Heart right ventricle (tissue), 16 donors: ENCODE measurements at regions of chr1 and their contacts with region 1.

Region 1: GRCh38 chr1:93567255-93567918 is 114.2 kb downstream of the BCAR3 start:
- DNase-seq: peak in 1 of 2 donors; percentile 31
- ATAC-seq: peak; percentile 27 to 78 (median 63)
- H3K4me3 ChIP-seq: no peak overlapping the region
- H3K27ac ChIP-seq: peak overlapping the region in 9 of 10 donors; percentile 34 to 83 (median 67)
- H3K4me1 ChIP-seq: peaks cover 9 to 36% (median 21%) of the 10 kb centered on the region in 9 donors
- H3K27me3 ChIP-seq: no peaks in the 10 kb centered on the region
- CTCF ChIP-seq: no peak

Region 2: GRCh38 chr1:93384656-93385055 is 182.7 kb before region 1 on chr1:
- intact Hi-C with region 1: no loop called
- DNase-seq: no peak
- ATAC-seq: no peak
- H3K4me3 ChIP-seq: no peak overlapping the region
- H3K27ac ChIP-seq: no peak overlapping the region
- H3K4me1 ChIP-seq: no peaks in the 10 kb centered on the region
- H3K27me3 ChIP-seq: no peaks in the 10 kb centered on the region
- CTCF ChIP-seq: no peak

Region 3: DNA sequence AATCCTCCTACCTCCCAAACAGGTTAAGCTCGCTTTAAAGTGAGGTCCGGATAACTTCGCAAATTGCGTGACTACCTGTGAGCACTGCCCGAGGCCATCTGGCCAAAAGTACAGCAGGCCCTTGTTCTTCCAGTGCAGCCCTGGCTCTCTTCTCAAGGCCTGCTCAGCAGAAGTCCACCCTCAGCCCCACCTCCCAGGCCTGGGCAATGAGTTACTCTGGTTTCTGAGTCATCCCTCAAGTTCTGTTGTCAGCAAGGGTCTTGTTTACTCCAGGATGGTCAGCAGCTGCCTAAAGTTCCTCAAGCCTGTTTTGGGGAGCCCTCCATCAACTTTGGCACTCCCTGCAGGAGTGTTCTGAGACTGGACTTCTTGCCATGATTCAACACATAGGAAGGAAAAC is 12.5 kb after region 1 on chr1:
- intact Hi-C with region 1: loop called in 1 of 10 experiments (anchors 1 kb)
- DNase-seq: peak in 1 of 2 donors; percentile 34
- ATAC-seq: peak in 6 of 8 donors; percentile 12 to 55 (median 30)
- H3K4me3 ChIP-seq: no peak overlapping the region
- H3K27ac ChIP-seq: peak overlapping the region in 8 of 10 donors; percentile 25 to 63 (median 44)
- H3K4me1 ChIP-seq: peaks cover 7 to 68% (median 46%) of the 10 kb centered on the region in 9 donors
- H3K27me3 ChIP-seq: no peaks in the 10 kb centered on the region
- CTCF ChIP-seq: no peak

Region 4: DNA sequence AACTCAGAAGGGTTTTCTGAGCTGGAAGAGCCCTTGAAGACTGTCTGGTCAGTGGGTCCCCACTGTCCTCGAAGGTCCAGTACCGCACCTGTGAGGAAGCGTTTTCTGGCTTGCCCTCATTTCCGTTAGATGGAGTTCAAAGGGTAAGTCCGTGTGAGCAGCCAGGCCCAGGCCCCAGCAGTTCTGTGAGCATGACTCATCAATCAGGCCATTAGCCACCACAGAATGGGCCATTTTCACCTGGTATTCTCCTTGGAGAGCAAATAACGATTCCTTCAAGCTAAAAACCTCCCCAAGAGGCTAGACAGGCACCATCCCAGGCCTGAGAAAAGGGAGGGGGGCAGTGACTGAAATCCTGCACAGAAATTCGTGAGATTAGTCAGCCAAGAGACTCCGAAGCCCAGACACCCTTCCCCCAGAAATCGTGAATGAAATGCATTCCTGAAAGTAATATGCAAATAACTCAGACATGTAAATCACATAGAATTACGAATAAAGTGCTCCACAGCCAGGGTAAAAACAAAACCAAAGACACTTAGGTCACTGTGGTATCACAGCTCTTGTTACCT is 48.3 kb after region 1 on chr1:
- intact Hi-C with region 1: loop called in 1 of 10 experiments (anchors 10 kb)
- DNase-seq: no peak
- ATAC-seq: no peak
- H3K4me3 ChIP-seq: no peak overlapping the region
- H3K27ac ChIP-seq: peak overlapping the region in 8 of 10 donors; percentile 55 to 82 (median 74)
- H3K4me1 ChIP-seq: peaks cover 24 to 98% (median 65%) of the 10 kb centered on the region in 9 donors
- H3K27me3 ChIP-seq: no peaks in the 10 kb centered on the region
- CTCF ChIP-seq: no peak

Region 5: GRCh38 chr1:93672069-93672468 is 104.7 kb after region 1 on chr1:
- intact Hi-C with region 1: loop called in 1 of 10 experiments (anchors 10 kb)
- DNase-seq: peak; percentile 61 to 88
- ATAC-seq: peak; percentile 44 to 80 (median 66)
- H3K4me3 ChIP-seq: peak overlapping the region in 1 of 10 donors; percentile 3
- H3K27ac ChIP-seq: peak overlapping the region in 9 of 10 donors; percentile 21 to 78 (median 55)
- H3K4me1 ChIP-seq: peaks cover 39 to 100% (median 93%) of the 10 kb centered on the region in 9 donors
- H3K27me3 ChIP-seq: no peaks in the 10 kb centered on the region
- CTCF ChIP-seq: no peak

Region 6: GRCh38 chr1:93851327-93851712 is 283.9 kb after region 1 on chr1:
- intact Hi-C with region 1: no loop called
- DNase-seq: no peak
- ATAC-seq: no peak
- H3K4me3 ChIP-seq: no peak overlapping the region
- H3K27ac ChIP-seq: no peak overlapping the region
- H3K4me1 ChIP-seq: peaks cover 0 to 13% (median 8%) of the 10 kb centered on the region in 9 donors
- H3K27me3 ChIP-seq: no peaks in the 10 kb centered on the region
- CTCF ChIP-seq: no peak